ENCODE measurements at regions of chr9 and their contacts with region 1.

Region 1: DNA sequence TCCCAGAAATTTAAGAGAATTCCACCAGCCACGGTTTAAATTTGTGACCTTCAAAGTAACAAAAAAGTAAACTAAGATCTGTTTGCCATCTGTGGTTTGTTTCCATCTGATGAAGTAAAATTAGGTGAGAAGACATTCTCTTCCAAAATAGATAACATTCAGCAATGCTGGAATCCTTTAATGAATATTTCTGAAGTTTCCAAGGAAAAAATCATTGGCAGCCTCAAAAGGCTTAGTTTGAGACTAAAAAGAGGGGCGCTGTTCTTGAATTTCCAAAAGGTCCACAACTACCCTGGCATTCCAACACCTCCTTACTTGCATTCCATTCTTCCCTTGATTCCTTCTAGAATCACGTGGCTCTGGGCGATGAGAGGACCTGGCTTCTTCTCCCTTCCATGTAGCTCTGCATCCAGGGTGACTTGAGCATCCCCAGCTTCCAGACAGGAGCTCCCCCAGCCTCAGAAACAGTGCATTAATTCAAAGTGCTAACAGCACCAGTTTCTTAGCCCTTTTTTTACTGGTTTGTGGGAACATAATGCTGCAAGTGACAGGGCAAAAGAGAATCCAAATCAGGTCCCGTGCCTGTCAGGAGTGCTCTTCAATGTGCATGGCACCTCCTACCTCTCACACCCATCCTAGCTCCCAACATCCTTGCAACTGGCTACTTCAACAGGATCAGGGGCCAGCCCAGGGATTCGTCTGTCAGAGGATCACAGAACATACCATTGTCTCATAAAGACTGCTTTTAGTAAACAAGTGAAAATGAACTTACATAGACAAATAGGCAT is 191.5 kb upstream of the S1PR3 start:
- DNase-seq: no peak
- H3K4me3 ChIP-seq: no peak overlapping the region
- H3K27ac ChIP-seq: peak overlapping the region in 1 of 4 donors; percentile 18
- H3K4me1 ChIP-seq: peaks cover 0 to 19% (median 14%) of the 10 kb centered on the region in 4 donors
- H3K27me3 ChIP-seq: no peaks in the 10 kb centered on the region
- CTCF ChIP-seq: no peak
- EP300 ChIP-seq: no peak
- POLR2A ChIP-seq: no peak

Region 2: DNA sequence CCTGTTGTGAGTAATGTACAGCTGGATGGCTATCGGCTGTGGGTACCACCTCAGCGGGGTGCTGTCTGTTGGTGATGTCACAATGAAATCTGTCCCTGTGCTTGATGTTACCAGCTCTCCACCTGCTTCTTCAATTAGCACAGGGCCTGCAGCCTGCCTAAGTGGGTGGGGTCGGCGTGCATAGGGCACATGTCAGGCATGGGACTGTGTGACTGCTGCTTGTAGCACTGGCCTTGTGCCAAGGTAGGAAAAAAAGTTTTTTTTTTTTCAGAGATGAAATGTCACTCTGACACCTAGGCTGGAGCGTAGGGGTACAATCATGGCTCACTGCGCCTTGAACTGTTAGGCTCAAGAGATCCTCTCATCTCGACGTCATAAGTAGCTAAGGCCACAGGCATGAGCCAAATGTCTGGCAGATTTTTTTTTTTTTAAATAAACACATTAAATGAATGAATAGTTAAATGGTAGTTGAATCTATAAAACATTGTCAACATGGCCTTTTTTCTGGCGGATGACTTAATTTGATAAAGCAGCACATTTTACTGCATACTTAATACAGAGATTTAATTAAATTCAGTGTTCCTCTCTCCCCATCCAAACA is 42.2 kb before region 1 on chr9:
- intact Hi-C with region 1: loop called (anchors 5 kb)
- DNase-seq: no peak
- H3K4me3 ChIP-seq: no peak overlapping the region
- H3K27ac ChIP-seq: no peak overlapping the region
- H3K4me1 ChIP-seq: peaks cover 0 to 19% (median 9%) of the 10 kb centered on the region in 4 donors
- H3K27me3 ChIP-seq: no peaks in the 10 kb centered on the region
- CTCF ChIP-seq: no peak
- EP300 ChIP-seq: no peak
- POLR2A ChIP-seq: no peak

Measured in sigmoid colon (tissue), 7 donors.